IMR-90 (cell line): ENCODE measurements at regions of chr1 and their contacts with region 1.

Region 1: GRCh38 chr1:170231669-170232068 is 85.9 kb downstream of the NTMT2 start:
- DNase-seq: no peak
- ATAC-seq: no peak
- H3K4me3 ChIP-seq: no peak overlapping the region
- H3K27ac ChIP-seq: no peak overlapping the region
- H3K4me1 ChIP-seq: no peaks in the 10 kb centered on the region
- H3K27me3 ChIP-seq: no peaks in the 10 kb centered on the region
- CTCF ChIP-seq: no peak
- POLR2A ChIP-seq: no peak
- RAD21 ChIP-seq: no peak

Region 2: DNA sequence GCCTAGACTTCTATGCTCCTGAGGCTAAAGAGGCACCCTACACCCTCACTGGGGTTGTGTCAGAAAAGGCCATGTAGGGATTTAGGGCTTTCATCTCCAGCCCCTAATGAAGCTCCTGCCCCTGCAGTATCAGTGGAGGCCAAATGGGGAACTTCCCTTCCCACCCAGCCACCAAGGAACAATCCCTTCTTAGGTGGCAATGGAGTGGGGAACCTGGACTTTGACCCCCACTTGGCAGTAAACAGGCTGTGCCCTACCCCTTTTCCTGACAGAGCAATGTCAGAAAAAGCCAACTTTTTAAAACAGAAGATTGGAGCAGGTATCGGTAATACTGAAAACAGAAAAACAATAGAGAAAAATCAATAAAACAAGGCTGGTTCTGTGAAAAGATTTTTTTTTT is 710.4 kb before region 1 on chr1:
- CTCF ChIA-PET with region 1: no interaction called
- POLR2A ChIA-PET with region 1: no interaction called
- dilution Hi-C with region 1: no loop called
- in situ Hi-C with region 1: no loop called
- intact Hi-C with region 1: loop called (anchors 5 kb)
- DNase-seq: no peak
- ATAC-seq: no peak
- H3K4me3 ChIP-seq: no peak overlapping the region
- H3K27ac ChIP-seq: no peak overlapping the region
- H3K4me1 ChIP-seq: no peaks in the 10 kb centered on the region
- H3K27me3 ChIP-seq: no peaks in the 10 kb centered on the region
- CTCF ChIP-seq: no peak
- POLR2A ChIP-seq: no peak
- RAD21 ChIP-seq: no peak